ENCODE measurements at regions of chr5 and their contacts with region 1.

Region 1: DNA sequence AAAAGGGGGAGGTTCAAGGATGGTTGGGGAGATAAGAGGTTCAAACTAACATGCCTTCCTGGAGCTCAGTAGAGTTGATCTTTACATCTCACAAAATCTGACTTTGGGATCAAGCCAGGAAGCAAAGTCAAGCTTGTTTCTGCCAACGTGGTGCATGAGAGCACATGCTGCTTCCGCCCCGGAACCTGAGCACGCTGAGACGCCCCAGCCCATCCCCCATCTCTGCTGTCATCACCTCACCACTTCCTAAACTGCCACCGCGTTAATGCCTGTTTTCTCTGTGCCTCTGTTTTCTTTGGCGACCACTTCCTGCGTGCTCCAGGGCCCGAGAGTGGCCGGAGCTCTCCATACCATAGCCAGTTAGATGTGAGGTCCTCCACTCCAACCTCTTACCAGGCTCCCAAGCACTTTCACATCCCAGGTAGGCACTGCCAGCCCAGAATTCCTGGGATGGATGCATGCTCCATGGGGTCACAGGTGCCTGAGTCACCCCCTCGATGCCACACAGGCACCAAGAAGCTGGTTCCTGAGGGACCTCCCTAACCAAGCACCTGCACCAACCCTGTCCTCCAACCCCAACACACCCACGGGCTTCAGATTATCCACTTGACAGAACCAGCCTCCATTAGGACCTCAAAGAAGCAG is 31.2 kb upstream of the AFAP1L1 start:
- DNase-seq: peak; percentile 73 to 93 (median 84)
- ATAC-seq: peak; percentile 99
- H3K4me3 ChIP-seq: no peak overlapping the region
- H3K4me3 Mint-ChIP-seq: peak overlapping the region; percentile 54
- H3K27ac ChIP-seq: peak overlapping the region; percentile 49 to 51
- H3K27ac Mint-ChIP-seq: peak overlapping the region; percentile 91
- H3K4me1 ChIP-seq: peaks cover 41% of the 10 kb centered on the region
- H3K4me1 Mint-ChIP-seq: peaks cover 70% of the 10 kb centered on the region
- H3K27me3 ChIP-seq: no peaks in the 10 kb centered on the region
- H3K27me3 Mint-ChIP-seq: no peaks in the 10 kb centered on the region
- CTCF ChIP-seq: no peak

Region 2: GRCh38 chr5:148383564-148384379 is 856.7 kb before region 1 on chr5 and contains the start of gene FBXO38:
- CTCF ChIA-PET with region 1: no interaction called
- POLR2A ChIA-PET with region 1: no interaction called
- intact Hi-C with region 1: loop called in 1 of 2 experiments (anchors 10 kb)
- DNase-seq: peak; percentile 93 to 99 (median 97)
- ATAC-seq: peak; percentile 94
- H3K4me3 ChIP-seq: peak within 1 kb of the TSS; percentile 84
- H3K4me3 Mint-ChIP-seq: peak within 1 kb of the TSS; percentile 89
- H3K27ac ChIP-seq: peak within 1 kb of the TSS; percentile 92 to 96
- H3K27ac Mint-ChIP-seq: peak within 1 kb of the TSS; percentile 96
- H3K4me1 ChIP-seq: peaks cover 25% of the 10 kb centered on the region
- H3K4me1 Mint-ChIP-seq: peaks cover 71% of the 10 kb centered on the region
- H3K27me3 ChIP-seq: no peaks in the 10 kb centered on the region
- H3K27me3 Mint-ChIP-seq: no peaks in the 10 kb centered on the region
- CTCF ChIP-seq: no peak
- total RNA-seq, gene FBXO38: 45.7 to 47.3 TPM

Region 3: GRCh38 chr5:148826053-148826738 is 414.3 kb before region 1 on chr5 and contains the start of gene ADRB2:
- CTCF ChIA-PET with region 1: no interaction called
- POLR2A ChIA-PET with region 1: no interaction called
- intact Hi-C with region 1: loop called in 1 of 2 experiments (anchors 10 kb)
- DNase-seq: peak; percentile 70 to 96 (median 82)
- ATAC-seq: peak; percentile 86
- H3K4me3 ChIP-seq: peak within 1 kb of the TSS; percentile 88
- H3K4me3 Mint-ChIP-seq: peak within 1 kb of the TSS; percentile 84
- H3K27ac ChIP-seq: peak within 1 kb of the TSS; percentile 53 to 68
- H3K27ac Mint-ChIP-seq: peak within 1 kb of the TSS; percentile 32
- H3K4me1 ChIP-seq: peaks cover 22% of the 10 kb centered on the region
- H3K4me1 Mint-ChIP-seq: peaks cover 30% of the 10 kb centered on the region
- H3K27me3 ChIP-seq: no peaks in the 10 kb centered on the region
- H3K27me3 Mint-ChIP-seq: peaks cover 13% of the 10 kb centered on the region
- CTCF ChIP-seq: no peak
- total RNA-seq, gene ADRB2: 1.2 to 1.6 TPM

Region 4: DNA sequence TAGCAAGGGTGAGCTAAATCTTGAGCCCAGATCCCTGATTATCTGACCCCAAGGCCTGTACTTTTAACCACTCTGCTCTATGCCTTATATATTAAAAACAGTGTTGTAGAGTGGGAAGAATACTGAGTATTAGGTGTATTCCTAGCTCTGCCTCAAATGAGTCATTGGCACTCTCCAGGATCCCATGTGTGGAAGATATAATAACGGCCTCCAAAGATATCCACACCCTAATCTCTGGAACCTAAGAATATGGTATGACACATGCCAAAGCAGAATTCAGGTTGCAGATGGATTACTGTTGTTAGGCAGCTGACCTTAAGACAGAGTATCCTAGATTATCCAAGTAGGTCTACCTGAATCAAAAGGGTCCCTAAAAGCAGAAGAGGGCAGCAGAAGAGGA is 303.2 kb before region 1 on chr5:
- CTCF ChIA-PET with region 1: no interaction called
- POLR2A ChIA-PET with region 1: no interaction called
- intact Hi-C with region 1: no loop called
- DNase-seq: no peak
- ATAC-seq: no peak
- H3K4me3 ChIP-seq: no peak overlapping the region
- H3K4me3 Mint-ChIP-seq: no peak overlapping the region
- H3K27ac ChIP-seq: no peak overlapping the region
- H3K27ac Mint-ChIP-seq: no peak overlapping the region
- H3K4me1 ChIP-seq: no peaks in the 10 kb centered on the region
- H3K4me1 Mint-ChIP-seq: no peaks in the 10 kb centered on the region
- H3K27me3 ChIP-seq: no peaks in the 10 kb centered on the region
- H3K27me3 Mint-ChIP-seq: peaks cover 17% of the 10 kb centered on the region
- CTCF ChIP-seq: no peak

Region 5: DNA sequence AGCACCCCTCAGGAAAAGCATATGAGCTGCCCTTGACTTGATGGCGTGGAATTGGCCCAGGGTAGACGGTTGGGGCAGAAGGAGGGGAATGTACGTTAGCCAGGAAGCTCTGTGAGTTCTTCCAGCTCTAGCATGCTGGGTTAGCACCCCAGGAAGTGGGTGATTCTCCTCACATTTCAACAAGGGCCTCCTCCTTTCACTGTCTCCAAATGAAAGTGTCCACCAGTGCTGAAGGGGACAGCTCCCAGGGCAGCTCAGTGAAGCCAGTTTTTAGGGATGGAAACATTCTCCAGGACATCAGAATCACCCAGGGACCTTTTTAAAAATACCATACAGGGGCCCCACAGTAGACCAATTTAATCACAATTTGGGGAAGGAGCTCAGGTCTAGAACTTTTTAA is 14.0 kb after region 1 on chr5:
- CTCF ChIA-PET with region 1: no interaction called
- POLR2A ChIA-PET with region 1: interaction called, 11 read pairs
- intact Hi-C with region 1: no loop called
- DNase-seq: no peak
- ATAC-seq: peak; percentile 52
- H3K4me3 ChIP-seq: no peak overlapping the region
- H3K4me3 Mint-ChIP-seq: no peak overlapping the region
- H3K27ac ChIP-seq: no peak overlapping the region
- H3K27ac Mint-ChIP-seq: no peak overlapping the region
- H3K4me1 ChIP-seq: no peaks in the 10 kb centered on the region
- H3K4me1 Mint-ChIP-seq: no peaks in the 10 kb centered on the region
- H3K27me3 ChIP-seq: peaks cover 0 to 2% of the 10 kb centered on the region in 2 experiments
- H3K27me3 Mint-ChIP-seq: no peaks in the 10 kb centered on the region
- CTCF ChIP-seq: no peak

Region 6: GRCh38 chr5:149357370-149358293 is 117.2 kb after region 1 on chr5 and contains the start of gene PCYOX1L:
- CTCF ChIA-PET with region 1: no interaction called
- POLR2A ChIA-PET with region 1: interaction called, 10 read pairs
- intact Hi-C with region 1: no loop called
- DNase-seq: peak; percentile 85 to 98 (median 96)
- ATAC-seq: peak; percentile 96
- H3K4me3 ChIP-seq: peak within 1 kb of the TSS; percentile 67
- H3K4me3 Mint-ChIP-seq: peak within 1 kb of the TSS; percentile 94
- H3K27ac ChIP-seq: peak within 1 kb of the TSS; percentile 67 to 82
- H3K27ac Mint-ChIP-seq: peak within 1 kb of the TSS; percentile 91
- H3K4me1 ChIP-seq: peaks cover 47% of the 10 kb centered on the region
- H3K4me1 Mint-ChIP-seq: peaks cover 71% of the 10 kb centered on the region
- H3K27me3 ChIP-seq: no peaks in the 10 kb centered on the region
- H3K27me3 Mint-ChIP-seq: no peaks in the 10 kb centered on the region
- CTCF ChIP-seq: no peak
- total RNA-seq, gene PCYOX1L: 22.9 to 24.8 TPM